Activated CD4-positive, alpha-beta T cell treated with anti-CD3 and anti-CD28 coated beads, Interleukin-2, amount 10 ng/mL, durations not matched to agents 24 days and 14 days (primary cell): ENCODE measurements at regions of chr14 and their contacts with region 1.

Region 1: DNA sequence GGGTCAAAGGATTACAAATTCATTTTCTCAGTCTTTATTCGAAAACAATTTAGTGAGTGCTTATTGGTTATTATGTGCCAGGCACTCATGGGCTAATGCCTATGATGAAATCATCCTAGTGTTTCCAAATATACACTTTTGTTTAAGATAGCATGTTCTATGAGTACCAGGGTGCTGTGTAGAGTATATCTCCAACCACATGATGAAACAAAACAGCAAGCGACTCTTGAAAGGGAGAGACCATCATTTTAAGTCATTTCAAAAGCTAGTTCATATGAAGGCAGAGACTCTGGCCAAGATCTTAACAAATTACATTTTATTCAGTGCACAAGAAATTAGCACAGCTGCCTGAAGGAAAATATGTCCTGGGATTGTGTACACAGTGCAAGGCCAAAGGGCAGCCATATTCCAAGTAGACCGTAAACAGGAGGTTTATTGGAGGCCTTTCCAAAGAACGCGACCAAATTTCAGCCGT is 204.2 kb downstream of the EFCAB11 start:
- DNase-seq: no peak
- H3K4me3 Mint-ChIP-seq: no peak overlapping the region
- H3K27ac Mint-ChIP-seq: peak overlapping the region; percentile 70
- H3K4me1 Mint-ChIP-seq: peaks cover 15% of the 10 kb centered on the region
- H3K27me3 Mint-ChIP-seq: no peaks in the 10 kb centered on the region

Region 2: DNA sequence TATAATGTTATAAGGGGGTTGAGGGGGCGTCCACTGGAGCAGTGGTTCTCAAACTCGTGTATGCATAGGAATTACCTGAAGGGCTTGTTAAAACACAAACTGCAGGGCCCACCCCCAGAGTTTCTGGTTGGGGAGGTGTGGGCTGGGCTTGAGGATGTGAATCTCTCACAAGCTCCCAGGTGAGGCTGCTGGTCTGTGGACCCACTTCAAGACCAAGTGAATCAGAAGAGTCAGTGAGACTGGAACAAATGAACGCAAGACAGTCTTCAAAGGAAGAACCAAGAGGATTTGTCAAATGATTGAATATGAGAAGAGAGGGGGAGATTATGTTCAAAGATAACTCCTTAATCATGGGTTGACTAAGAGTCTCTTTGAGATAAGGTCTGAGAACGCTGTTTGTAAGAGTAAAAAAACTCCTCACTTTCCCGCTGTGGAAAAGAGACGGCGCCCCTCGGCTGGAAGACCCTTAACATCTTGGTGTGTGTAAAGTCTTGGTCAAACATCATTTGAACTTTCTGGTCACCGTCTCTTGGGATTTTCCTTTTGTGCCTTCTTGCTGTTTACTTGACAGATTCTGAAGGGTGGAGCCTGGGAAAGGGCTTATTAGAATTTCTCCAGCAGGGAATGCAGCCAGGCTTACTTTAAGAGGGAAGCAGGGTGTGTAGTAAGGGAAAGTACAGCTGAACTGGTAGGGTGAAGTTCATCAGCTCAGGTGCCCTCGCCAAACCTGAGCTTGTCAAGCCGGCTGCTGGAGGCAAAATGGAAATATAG is 328.0 kb before region 1 on chr14:
- intact Hi-C with region 1: loop called (anchors 2 kb)
- DNase-seq: no peak
- H3K4me3 Mint-ChIP-seq: no peak overlapping the region
- H3K27ac Mint-ChIP-seq: peak overlapping the region; percentile 64
- H3K4me1 Mint-ChIP-seq: peaks cover 55% of the 10 kb centered on the region
- H3K27me3 Mint-ChIP-seq: no peaks in the 10 kb centered on the region

Region 3: DNA sequence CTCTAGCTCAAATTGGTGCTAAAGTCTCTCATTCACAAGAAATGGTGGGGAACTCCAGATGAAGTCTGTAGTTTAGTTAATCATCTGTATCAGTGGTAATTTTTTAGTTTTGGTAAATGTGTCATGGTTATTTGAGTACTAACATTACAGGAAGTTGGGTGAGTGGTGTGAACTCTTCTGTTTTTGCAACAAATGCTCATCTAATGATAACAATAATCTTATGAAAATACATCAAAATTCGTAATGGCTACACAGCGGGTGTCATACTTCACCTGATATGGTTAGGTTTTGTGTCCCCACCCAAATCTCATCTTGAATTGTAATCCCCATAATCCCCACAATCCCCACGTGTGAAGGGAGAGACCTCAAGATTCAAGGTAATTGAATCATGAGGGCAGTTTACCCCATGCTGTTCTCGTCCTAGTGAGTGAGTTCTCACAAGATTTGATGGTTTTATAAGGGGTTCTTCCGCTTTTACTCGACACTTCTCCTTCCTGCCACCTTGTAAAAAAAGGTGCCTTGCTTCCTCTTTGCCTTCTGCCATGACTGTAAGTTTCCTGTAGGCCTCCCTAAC is 124.0 kb before region 1 on chr14:
- intact Hi-C with region 1: loop called (anchors 2 kb)
- DNase-seq: no peak
- H3K4me3 Mint-ChIP-seq: no peak overlapping the region
- H3K27ac Mint-ChIP-seq: peak overlapping the region; percentile 84
- H3K4me1 Mint-ChIP-seq: peaks cover 57% of the 10 kb centered on the region
- H3K27me3 Mint-ChIP-seq: no peaks in the 10 kb centered on the region

Region 4: DNA sequence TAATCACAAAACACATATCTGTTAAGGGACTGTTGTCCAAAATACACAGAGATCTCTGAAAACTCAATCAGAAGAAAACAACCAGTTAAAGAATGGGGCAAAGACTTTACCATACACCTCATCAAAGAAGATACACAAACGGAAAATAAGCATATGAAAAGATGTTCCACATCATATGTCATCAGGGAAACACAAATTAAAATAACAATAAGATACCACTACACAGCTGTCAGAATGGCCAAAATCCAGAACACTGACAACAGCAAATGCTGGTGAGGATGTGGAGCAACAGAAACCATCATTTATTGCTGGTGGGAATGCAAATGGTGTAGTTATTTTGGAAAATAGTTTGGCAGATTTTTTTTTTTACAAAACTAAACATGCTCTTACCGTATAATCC is 112.7 kb before region 1 on chr14:
- intact Hi-C with region 1: no loop called
- DNase-seq: no peak
- H3K4me3 Mint-ChIP-seq: no peak overlapping the region
- H3K27ac Mint-ChIP-seq: peak overlapping the region; percentile 15
- H3K4me1 Mint-ChIP-seq: peaks cover 47% of the 10 kb centered on the region
- H3K27me3 Mint-ChIP-seq: no peaks in the 10 kb centered on the region

Region 5: GRCh38 chr14:89701211-89702043 is 48.9 kb before region 1 on chr14:
- intact Hi-C with region 1: loop called (anchors 5 kb)
- DNase-seq: peak; percentile 95
- H3K4me3 Mint-ChIP-seq: peak overlapping the region; percentile 76
- H3K27ac Mint-ChIP-seq: peak overlapping the region; percentile 88
- H3K4me1 Mint-ChIP-seq: peaks cover 34% of the 10 kb centered on the region
- H3K27me3 Mint-ChIP-seq: no peaks in the 10 kb centered on the region

Region 6: GRCh38 chr14:90039253-90040010 is 289.1 kb after region 1 on chr14:
- intact Hi-C with region 1: no loop called
- DNase-seq: no peak
- H3K4me3 Mint-ChIP-seq: no peak overlapping the region
- H3K27ac Mint-ChIP-seq: peak overlapping the region; percentile 12
- H3K4me1 Mint-ChIP-seq: peaks cover 11% of the 10 kb centered on the region
- H3K27me3 Mint-ChIP-seq: no peaks in the 10 kb centered on the region